Heart right ventricle (tissue), 16 donors: ENCODE measurements at regions of chr12 and their contacts with region 1.

Region 1: GRCh38 chr12:21940549-21941505 is at the start of gene ABCC9:
- DNase-seq: peak; percentile 64 to 67
- ATAC-seq: peak; percentile 73 to 88 (median 86)
- H3K4me3 ChIP-seq: peak within 1 kb of the TSS; percentile 23 to 65 (median 58)
- H3K27ac ChIP-seq: peak within 1 kb of the TSS; percentile 79 to 96 (median 92)
- H3K4me1 ChIP-seq: peaks cover 0 to 31% (median 5%) of the 10 kb centered on the region in 9 donors
- H3K27me3 ChIP-seq: peaks cover 0 to 46% (median 5%) of the 10 kb centered on the region in 7 donors
- CTCF ChIP-seq: peak in 3 of 9 donors; percentile 19 to 24 (median 20)
- total RNA-seq, gene ABCC9: 64.3 to 128 (median 104) TPM

Region 2: GRCh38 chr12:21666722-21667121 is 274.1 kb before region 1 on chr12:
- intact Hi-C with region 1: no loop called
- DNase-seq: no peak
- ATAC-seq: no peak
- H3K4me3 ChIP-seq: no peak overlapping the region
- H3K27ac ChIP-seq: no peak overlapping the region
- H3K4me1 ChIP-seq: no peaks in the 10 kb centered on the region
- H3K27me3 ChIP-seq: no peaks in the 10 kb centered on the region
- CTCF ChIP-seq: no peak

Region 3: GRCh38 chr12:21831791-21832344 is 109.0 kb before region 1 on chr12:
- intact Hi-C with region 1: loop called in 1 of 10 experiments (anchors 10 kb)
- DNase-seq: peak in 1 of 2 donors; percentile 36
- ATAC-seq: peak; percentile 60 to 87 (median 74)
- H3K4me3 ChIP-seq: no peak overlapping the region
- H3K27ac ChIP-seq: peak overlapping the region in 9 of 10 donors; percentile 23 to 77 (median 59)
- H3K4me1 ChIP-seq: peaks cover 0 to 30% (median 7%) of the 10 kb centered on the region in 9 donors
- H3K27me3 ChIP-seq: no peaks in the 10 kb centered on the region
- CTCF ChIP-seq: no peak

Region 4: DNA sequence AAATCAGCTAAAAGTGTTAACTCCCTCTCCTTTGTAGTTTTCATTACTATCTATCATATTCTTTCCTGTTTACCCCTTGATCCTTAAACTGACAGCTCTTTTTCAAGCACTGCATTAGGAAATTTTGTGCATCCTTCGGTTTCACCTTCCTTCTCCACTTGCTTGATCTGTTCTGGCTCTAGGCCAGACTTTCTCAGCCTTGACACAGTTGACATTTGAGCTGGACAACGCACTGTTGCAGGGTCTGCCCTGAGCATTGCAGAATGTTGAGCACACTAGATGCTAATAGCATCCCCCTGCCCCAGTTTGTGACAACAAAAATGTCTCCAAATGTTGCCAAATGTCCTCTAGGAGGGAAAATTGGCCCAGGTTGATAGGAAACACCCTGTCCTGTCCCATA is 90.9 kb before region 1 on chr12:
- intact Hi-C with region 1: loop called in 2 of 10 experiments (anchors 10 kb)
- DNase-seq: peak in 1 of 2 donors; percentile 12
- ATAC-seq: peak in 5 of 8 donors; percentile 37 to 78 (median 61)
- H3K4me3 ChIP-seq: no peak overlapping the region
- H3K27ac ChIP-seq: peak overlapping the region in 1 of 10 donors; percentile 45
- H3K4me1 ChIP-seq: peaks cover 0 to 17% (median 6%) of the 10 kb centered on the region in 9 donors
- H3K27me3 ChIP-seq: no peaks in the 10 kb centered on the region
- CTCF ChIP-seq: no peak

Region 5: GRCh38 chr12:21881965-21882364 is 58.9 kb before region 1 on chr12:
- intact Hi-C with region 1: loop called in 1 of 10 experiments (anchors 2 kb)
- DNase-seq: peak; percentile 20 to 67
- ATAC-seq: peak; percentile 74 to 97 (median 90)
- H3K4me3 ChIP-seq: no peak overlapping the region
- H3K27ac ChIP-seq: peak overlapping the region; percentile 59 to 83 (median 77)
- H3K4me1 ChIP-seq: peaks cover 5 to 64% (median 37%) of the 10 kb centered on the region in 9 donors
- H3K27me3 ChIP-seq: no peaks in the 10 kb centered on the region
- CTCF ChIP-seq: no peak

Region 6: DNA sequence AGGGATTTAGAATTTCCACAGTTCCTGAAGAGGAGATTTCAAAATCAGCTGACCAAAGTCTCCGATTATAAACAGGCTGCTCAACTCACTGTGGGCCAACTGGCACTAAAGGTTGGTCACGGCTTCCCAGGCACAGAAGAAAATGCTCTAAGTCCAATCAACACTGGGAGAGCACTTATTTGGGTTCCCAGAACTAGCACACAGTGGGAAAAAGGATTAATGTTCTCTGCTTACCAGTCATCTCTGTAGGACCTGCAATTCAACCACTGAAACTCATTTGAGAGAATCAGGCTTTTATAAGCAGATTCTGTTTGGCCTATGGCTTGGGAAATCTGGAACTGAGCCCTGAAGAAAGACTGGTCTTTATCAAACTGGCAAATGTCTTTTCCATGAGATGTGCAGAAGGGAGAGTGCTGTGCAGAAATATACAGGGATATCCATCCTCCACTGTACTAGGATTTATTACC is 49.0 kb before region 1 on chr12:
- intact Hi-C with region 1: loop called in 2 of 10 experiments (anchors 5 kb)
- DNase-seq: peak; percentile 27 to 40
- ATAC-seq: peak; percentile 72 to 95 (median 84)
- H3K4me3 ChIP-seq: no peak overlapping the region
- H3K27ac ChIP-seq: peak overlapping the region; percentile 20 to 80 (median 66)
- H3K4me1 ChIP-seq: peaks cover 0 to 54% (median 17%) of the 10 kb centered on the region in 9 donors
- H3K27me3 ChIP-seq: no peaks in the 10 kb centered on the region
- CTCF ChIP-seq: no peak